Heart right ventricle (tissue), 16 donors: ENCODE measurements at regions of chr7 and their contacts with region 1.

Region 1: DNA sequence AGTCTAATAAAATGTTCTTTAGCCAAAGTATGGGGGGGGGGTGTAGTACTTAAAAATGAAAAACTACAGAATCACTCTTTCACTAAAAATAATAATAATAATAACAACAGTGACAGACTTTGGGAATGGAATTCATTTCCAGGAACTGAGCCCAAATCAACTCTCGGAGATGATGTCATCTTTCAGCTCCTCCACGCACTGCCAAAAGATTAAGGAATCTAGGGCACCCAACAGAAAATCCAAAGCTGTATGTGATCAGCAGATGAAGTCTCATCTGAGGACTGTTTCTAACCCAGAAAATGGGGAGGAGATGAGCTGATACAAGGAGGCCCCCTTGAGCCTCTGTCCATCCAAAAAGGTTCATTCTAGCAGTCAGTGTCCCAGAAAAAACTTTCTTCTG is 54.5 kb downstream of the GRB10 start:
- DNase-seq: peak in 1 of 2 donors; percentile 45
- ATAC-seq: peak in 7 of 8 donors; percentile 34 to 65 (median 56)
- H3K4me3 ChIP-seq: no peak overlapping the region
- H3K27ac ChIP-seq: peak overlapping the region in 4 of 10 donors; percentile 8 to 68 (median 14)
- H3K4me1 ChIP-seq: peaks cover 13 to 94% (median 77%) of the 10 kb centered on the region in 9 donors
- H3K27me3 ChIP-seq: no peaks in the 10 kb centered on the region
- CTCF ChIP-seq: no peak

Region 2: DNA sequence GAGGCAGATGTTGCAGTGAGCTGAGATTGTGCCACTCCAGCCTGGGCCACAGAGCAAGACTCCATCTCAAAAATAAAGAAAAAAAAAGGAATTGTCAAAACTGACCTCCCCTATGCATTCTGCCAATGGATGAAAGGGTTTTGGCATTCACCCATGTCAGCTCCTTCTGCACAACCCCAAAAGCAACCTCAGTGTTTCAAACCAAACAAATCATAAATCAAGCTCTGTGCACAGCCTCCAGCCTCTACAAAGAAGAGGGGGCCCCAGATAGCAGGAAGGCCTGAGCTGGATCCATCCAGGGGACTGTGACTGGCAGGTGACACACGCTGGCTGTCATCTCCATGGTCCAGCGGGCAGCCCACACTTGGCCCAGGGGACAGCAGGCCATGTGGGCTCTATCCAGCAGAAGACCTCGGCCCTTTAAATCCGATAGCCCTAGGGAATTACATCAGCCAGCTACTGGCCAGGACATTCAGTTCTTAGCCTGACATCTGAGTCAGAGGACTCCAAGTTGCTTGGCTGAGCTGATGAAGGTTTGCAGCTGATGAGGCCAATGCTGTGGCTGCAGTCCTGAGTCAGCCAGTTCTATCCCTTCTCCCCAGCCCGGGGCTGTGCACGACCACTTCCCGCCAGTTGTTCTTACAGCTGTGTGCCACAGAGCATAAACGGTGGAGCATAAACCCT is 226.0 kb before region 1 on chr7:
- intact Hi-C with region 1: no loop called
- DNase-seq: peak; percentile 65 to 71
- ATAC-seq: peak; percentile 82 to 97 (median 94)
- H3K4me3 ChIP-seq: no peak overlapping the region
- H3K27ac ChIP-seq: peak overlapping the region in 7 of 10 donors; percentile 24 to 58 (median 41)
- H3K4me1 ChIP-seq: peaks cover 5 to 28% (median 19%) of the 10 kb centered on the region in 9 donors
- H3K27me3 ChIP-seq: no peaks in the 10 kb centered on the region
- CTCF ChIP-seq: no peak

Region 3: DNA sequence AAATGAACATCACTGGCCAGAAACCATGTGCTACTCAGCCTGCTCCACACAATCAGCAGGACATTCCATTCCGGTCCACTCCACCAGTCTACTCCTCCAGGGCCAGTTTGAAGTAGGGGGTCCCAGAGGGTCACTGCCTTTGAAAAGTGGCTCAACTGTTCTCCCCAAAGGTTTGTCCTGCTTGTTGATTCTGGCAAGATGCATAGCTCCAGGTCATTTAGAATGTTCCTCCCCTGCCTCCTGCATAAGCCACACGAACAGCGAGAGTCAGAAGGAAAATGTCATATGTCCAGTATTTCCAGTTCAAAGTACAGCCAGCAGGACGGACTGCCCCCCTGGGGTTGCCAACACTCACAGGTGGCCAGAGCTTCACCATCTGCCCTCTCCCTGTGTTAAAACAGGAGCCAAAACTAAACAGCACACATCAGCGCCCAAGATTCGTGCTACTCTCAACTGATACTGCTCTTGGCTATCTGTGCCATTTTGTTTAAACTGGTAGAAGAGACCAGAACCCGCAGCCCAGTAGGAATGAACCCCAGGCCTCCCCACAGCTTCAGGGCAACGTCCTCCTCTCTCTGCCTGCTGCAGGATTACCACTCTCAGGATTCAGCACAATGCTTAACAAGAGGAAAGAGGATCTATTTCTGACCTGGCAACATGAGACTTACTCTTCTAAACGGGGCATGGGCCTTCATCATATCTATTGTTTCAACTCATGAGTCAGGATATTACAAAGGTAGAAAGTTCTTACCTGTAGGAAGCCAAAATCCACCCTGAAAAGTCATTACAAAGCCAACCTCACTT is 43.2 kb after region 1 on chr7:
- intact Hi-C with region 1: loop called in 1 of 10 experiments (anchors 10 kb)
- DNase-seq: no peak
- ATAC-seq: peak; percentile 20 to 78 (median 42)
- H3K4me3 ChIP-seq: no peak overlapping the region
- H3K27ac ChIP-seq: peak overlapping the region in 5 of 10 donors; percentile 7 to 62 (median 26)
- H3K4me1 ChIP-seq: peaks cover 7 to 82% (median 36%) of the 10 kb centered on the region in 9 donors
- H3K27me3 ChIP-seq: no peaks in the 10 kb centered on the region
- CTCF ChIP-seq: no peak